ENCODE measurements at regions of chr10 and their contacts with region 1.

Region 1: GRCh38 chr10:97632949-97633884 is at the start of gene MORN4:
- DNase-seq: peak; percentile 82 to 96 (median 91)
- ATAC-seq: peak; percentile 99
- H3K4me3 ChIP-seq: peak within 1 kb of the TSS; percentile 77 to 89
- H3K4me3 Mint-ChIP-seq: peak within 1 kb of the TSS; percentile 99
- H3K27ac ChIP-seq: peak within 1 kb of the TSS; percentile 18 to 39
- H3K27ac Mint-ChIP-seq: peak within 1 kb of the TSS; percentile 83
- H3K4me1 ChIP-seq: peaks cover 3% of the 10 kb centered on the region
- H3K4me1 Mint-ChIP-seq: peaks cover 13% of the 10 kb centered on the region
- H3K27me3 ChIP-seq: peaks cover 0 to 3% of the 10 kb centered on the region in 2 experiments
- H3K27me3 Mint-ChIP-seq: no peaks in the 10 kb centered on the region
- CTCF ChIP-seq: no peak
- total RNA-seq, gene MORN4: not detected

Region 2: GRCh38 chr10:97292097-97292862 is 340.9 kb before region 1 on chr10 and contains the start of gene ARHGAP19:
- CTCF ChIA-PET with region 1: no interaction called
- POLR2A ChIA-PET with region 1: no interaction called
- intact Hi-C with region 1: loop called in 1 of 2 experiments (anchors 5 kb)
- DNase-seq: peak; percentile 86 to 98 (median 91)
- ATAC-seq: peak; percentile 99
- H3K4me3 ChIP-seq: peak within 1 kb of the TSS; percentile 82 to 93
- H3K4me3 Mint-ChIP-seq: peak within 1 kb of the TSS; percentile 94
- H3K27ac ChIP-seq: peak within 1 kb of the TSS; percentile 73 to 75
- H3K27ac Mint-ChIP-seq: peak within 1 kb of the TSS; percentile 86
- H3K4me1 ChIP-seq: peaks cover 6% of the 10 kb centered on the region
- H3K4me1 Mint-ChIP-seq: peaks cover 20% of the 10 kb centered on the region
- H3K27me3 ChIP-seq: no peaks in the 10 kb centered on the region
- H3K27me3 Mint-ChIP-seq: no peaks in the 10 kb centered on the region
- CTCF ChIP-seq: no peak
- total RNA-seq, gene ARHGAP19: 5.7 to 6.4 TPM

Region 3: GRCh38 chr10:97318772-97319651 is 314.2 kb before region 1 on chr10 and contains the start of gene FRAT1:
- CTCF ChIA-PET with region 1: no interaction called
- POLR2A ChIA-PET with region 1: no interaction called
- intact Hi-C with region 1: loop called in 1 of 2 experiments (anchors 5 kb)
- DNase-seq: peak; percentile 86 to 97 (median 92)
- ATAC-seq: peak; percentile 76
- H3K4me3 ChIP-seq: peak within 1 kb of the TSS; percentile 76 to 79
- H3K4me3 Mint-ChIP-seq: peak within 1 kb of the TSS; percentile 99
- H3K27ac ChIP-seq: peak within 1 kb of the TSS; percentile 100
- H3K27ac Mint-ChIP-seq: peak within 1 kb of the TSS; percentile 100
- H3K4me1 ChIP-seq: peaks cover 24% of the 10 kb centered on the region
- H3K4me1 Mint-ChIP-seq: peaks cover 29% of the 10 kb centered on the region
- H3K27me3 ChIP-seq: no peaks in the 10 kb centered on the region
- H3K27me3 Mint-ChIP-seq: no peaks in the 10 kb centered on the region
- CTCF ChIP-seq: no peak
- total RNA-seq, gene FRAT1: 39.6 to 40.2 TPM

Region 4: DNA sequence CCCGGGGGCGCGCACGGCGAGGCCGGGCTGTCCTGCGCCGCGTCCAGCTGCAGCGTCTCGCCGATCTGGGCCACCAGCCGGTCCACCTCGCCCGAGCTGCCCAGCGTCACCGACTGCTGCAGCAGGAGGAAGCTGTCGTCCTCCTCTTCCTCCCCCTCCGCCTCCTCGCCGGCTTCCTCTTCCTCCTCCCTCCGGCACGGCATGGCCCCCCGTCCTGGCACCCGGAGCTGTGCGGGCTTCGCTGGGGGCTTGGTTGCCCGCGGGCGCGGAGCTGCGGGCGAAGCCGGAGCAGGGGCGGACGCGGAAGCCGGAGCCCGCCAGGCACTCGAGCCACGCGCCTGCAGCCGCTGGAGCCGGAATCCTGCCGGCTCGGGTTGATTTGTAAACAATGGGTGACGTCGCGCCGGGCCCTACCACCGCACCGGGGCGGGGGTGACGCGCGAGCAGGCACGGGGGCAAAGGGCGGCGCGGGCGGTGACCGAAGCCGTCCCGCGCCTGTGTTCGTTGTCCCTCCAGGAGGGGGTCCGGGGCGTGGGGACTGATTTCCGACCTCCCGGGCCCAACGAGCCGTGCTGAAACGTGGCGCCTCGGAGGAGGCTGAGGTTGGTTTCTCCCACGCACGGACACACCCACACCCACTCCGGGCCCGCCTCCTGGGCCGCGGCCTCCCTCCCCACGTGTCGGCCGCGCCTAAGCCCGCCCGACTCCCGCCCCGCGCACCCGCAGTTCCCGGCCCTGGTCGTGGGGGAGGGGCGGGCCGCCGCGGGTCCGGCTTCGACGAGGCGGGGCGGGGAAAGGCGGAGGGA is 298.6 kb before region 1 on chr10 and contains the start of gene FRAT2:
- CTCF ChIA-PET with region 1: no interaction called
- POLR2A ChIA-PET with region 1: no interaction called
- intact Hi-C with region 1: loop called in 1 of 2 experiments (anchors 10 kb)
- DNase-seq: peak; percentile 80 to 95 (median 87)
- ATAC-seq: peak; percentile 89
- H3K4me3 ChIP-seq: peak within 1 kb of the TSS; percentile 61 to 92
- H3K4me3 Mint-ChIP-seq: peak within 1 kb of the TSS; percentile 97
- H3K27ac ChIP-seq: peak within 1 kb of the TSS; percentile 99
- H3K27ac Mint-ChIP-seq: peak within 1 kb of the TSS; percentile 96
- H3K4me1 ChIP-seq: peaks cover 34% of the 10 kb centered on the region
- H3K4me1 Mint-ChIP-seq: peaks cover 39% of the 10 kb centered on the region
- H3K27me3 ChIP-seq: no peaks in the 10 kb centered on the region
- H3K27me3 Mint-ChIP-seq: no peaks in the 10 kb centered on the region
- CTCF ChIP-seq: no peak
- total RNA-seq, gene FRAT2: 20.8 to 22.3 TPM

Region 5: DNA sequence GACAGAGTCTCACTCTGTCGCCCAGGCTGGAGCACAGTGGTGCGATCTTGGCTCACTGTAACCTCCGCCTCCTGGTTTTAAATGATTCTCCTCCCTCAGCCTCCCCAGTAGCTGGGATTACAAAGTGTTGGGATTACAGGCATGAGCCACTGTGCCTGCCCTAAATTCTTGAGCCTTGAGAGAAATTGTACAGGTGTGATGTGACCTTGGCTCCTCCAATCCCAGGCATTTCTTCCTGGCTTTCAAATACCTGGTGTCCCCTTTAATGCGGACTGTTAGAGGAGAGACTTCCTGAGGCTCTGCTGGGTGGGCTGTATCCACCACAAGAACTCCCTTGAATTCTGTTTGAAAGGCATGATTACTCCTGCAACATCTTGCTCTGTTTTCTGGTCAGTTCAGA is 14.9 kb before region 1 on chr10:
- CTCF ChIA-PET with region 1: no interaction called
- POLR2A ChIA-PET with region 1: no interaction called
- intact Hi-C with region 1: no loop called
- DNase-seq: no peak
- ATAC-seq: no peak
- H3K4me3 ChIP-seq: no peak overlapping the region
- H3K4me3 Mint-ChIP-seq: no peak overlapping the region
- H3K27ac ChIP-seq: no peak overlapping the region
- H3K27ac Mint-ChIP-seq: no peak overlapping the region
- H3K4me1 ChIP-seq: no peaks in the 10 kb centered on the region
- H3K4me1 Mint-ChIP-seq: no peaks in the 10 kb centered on the region
- H3K27me3 ChIP-seq: no peaks in the 10 kb centered on the region
- H3K27me3 Mint-ChIP-seq: no peaks in the 10 kb centered on the region
- CTCF ChIP-seq: no peak

Region 6: GRCh38 chr10:97686962-97687784 is 54.0 kb after region 1 on chr10 and contains the start of gene AVPI1:
- CTCF ChIA-PET with region 1: no interaction called
- POLR2A ChIA-PET with region 1: no interaction called
- intact Hi-C with region 1: loop called in 1 of 2 experiments (anchors 1 kb)
- DNase-seq: peak; percentile 90 to 98 (median 96)
- ATAC-seq: peak; percentile 94
- H3K4me3 ChIP-seq: peak within 1 kb of the TSS; percentile 77 to 82
- H3K4me3 Mint-ChIP-seq: peak within 1 kb of the TSS; percentile 89
- H3K27ac ChIP-seq: peak within 1 kb of the TSS; percentile 47 to 64
- H3K27ac Mint-ChIP-seq: peak within 1 kb of the TSS; percentile 86
- H3K4me1 ChIP-seq: peaks cover 22% of the 10 kb centered on the region
- H3K4me1 Mint-ChIP-seq: peaks cover 23% of the 10 kb centered on the region
- H3K27me3 ChIP-seq: no peaks in the 10 kb centered on the region
- H3K27me3 Mint-ChIP-seq: peaks cover 4% of the 10 kb centered on the region
- CTCF ChIP-seq: no peak
- total RNA-seq, gene AVPI1: 13.7 TPM

Measured in CD8-positive, alpha-beta T cell (primary cell).